ENCODE measurements at regions of chr15 and their contacts with region 1.

Region 1: GRCh38 chr15:101288908-101289513 is 6.0 kb downstream of the SNRPA1 start:
- DNase-seq: peak; percentile 74 to 89 (median 84)
- H3K4me3 ChIP-seq: no peak overlapping the region
- H3K27ac ChIP-seq: no peak overlapping the region
- H3K4me1 ChIP-seq: peaks cover 3 to 18% (median 12%) of the 10 kb centered on the region in 4 experiments
- H3K27me3 ChIP-seq: no peaks in the 10 kb centered on the region

Region 2: DNA sequence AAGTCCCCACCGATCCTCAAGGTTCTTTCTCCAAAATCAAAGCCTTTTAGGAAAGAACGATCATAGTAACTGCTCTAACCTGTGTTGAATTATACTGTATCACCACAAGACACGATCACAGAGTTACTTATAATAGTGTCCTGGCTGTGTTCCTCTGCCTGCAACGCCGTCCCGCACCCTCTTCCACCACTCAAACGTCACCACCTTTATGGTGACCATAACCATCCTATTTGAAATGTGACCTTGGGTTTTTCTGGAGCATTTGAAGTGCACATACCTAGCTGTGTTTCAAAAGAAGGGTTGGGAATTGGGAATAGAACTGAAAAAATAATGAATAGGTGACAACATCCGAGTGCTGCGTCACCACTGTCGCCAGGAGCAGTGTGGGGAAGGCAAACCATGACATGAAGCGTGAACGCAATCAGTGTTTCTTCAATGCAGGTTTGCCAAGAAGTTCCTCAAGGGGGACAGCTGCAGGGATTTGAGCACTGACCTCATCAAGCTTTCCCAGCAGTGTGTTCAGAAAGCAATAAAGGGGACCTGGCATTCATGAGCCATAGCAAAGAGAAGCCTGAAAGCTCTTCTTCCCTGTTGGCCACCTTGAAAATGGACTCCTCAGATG is 11.0 kb before region 1 on chr15:
- CTCF ChIA-PET with region 1: interaction called, 25 read pairs
- POLR2A ChIA-PET with region 1: interaction called, 3 read pairs
- DNase-seq: no peak
- H3K4me3 ChIP-seq: peak overlapping the region in 6 of 7 experiments; percentile 80 to 98 (median 93)
- H3K27ac ChIP-seq: no peak overlapping the region
- H3K4me1 ChIP-seq: peaks cover 5 to 16% (median 14%) of the 10 kb centered on the region in 4 experiments
- H3K27me3 ChIP-seq: no peaks in the 10 kb centered on the region

Region 3: GRCh38 chr15:101333401-101333800 is 44.4 kb after region 1 on chr15:
- CTCF ChIA-PET with region 1: no interaction called
- POLR2A ChIA-PET with region 1: no interaction called
- DNase-seq: no peak
- H3K4me3 ChIP-seq: no peak overlapping the region
- H3K27ac ChIP-seq: no peak overlapping the region
- H3K4me1 ChIP-seq: no peaks in the 10 kb centered on the region
- H3K27me3 ChIP-seq: peaks cover 0 to 52% (median 13%) of the 10 kb centered on the region in 5 experiments

Region 4: DNA sequence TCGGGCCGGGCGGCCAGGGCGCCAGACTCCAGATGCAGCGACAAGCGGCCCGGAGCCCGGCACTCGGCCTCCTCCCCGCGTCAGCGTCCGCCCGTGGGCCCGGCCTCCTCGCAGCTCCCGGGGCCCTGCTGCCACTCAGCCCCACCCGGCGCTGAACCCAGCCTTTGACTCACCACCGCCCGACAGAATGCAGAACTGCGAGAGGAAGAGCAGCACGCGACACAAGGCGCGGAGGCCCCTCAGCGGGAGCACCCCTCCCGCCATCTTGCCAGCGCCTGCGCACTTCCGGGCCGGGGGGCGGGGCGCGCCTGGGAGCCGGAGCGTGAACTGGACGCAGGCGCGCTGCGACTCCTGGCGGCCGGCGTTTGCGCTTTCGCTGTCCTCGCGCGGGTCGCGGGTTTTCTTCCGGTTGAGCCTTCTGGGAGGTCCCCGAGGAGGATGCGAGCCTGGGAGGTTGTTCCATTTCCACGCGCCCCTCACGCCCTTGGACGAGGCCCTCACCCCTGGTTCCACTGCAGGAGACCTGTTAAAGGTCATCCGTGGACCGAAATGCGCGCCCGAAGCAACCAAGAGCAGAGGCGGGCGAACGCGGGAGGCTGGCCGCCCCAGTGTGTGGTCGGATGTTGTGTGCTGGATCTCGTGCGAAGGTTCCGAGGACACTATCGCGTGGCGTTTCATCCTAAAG is 363.2 kb after region 1 on chr15 and contains the start of gene TM2D3:
- CTCF ChIA-PET with region 1: interaction called, 23 read pairs
- POLR2A ChIA-PET with region 1: no interaction called
- DNase-seq: peak; percentile 95 to 97 (median 97)
- H3K4me3 ChIP-seq: peak within 1 kb of the TSS; percentile 78 to 93 (median 89)
- H3K27ac ChIP-seq: peak within 1 kb of the TSS; percentile 90 to 97
- H3K4me1 ChIP-seq: peaks cover 12 to 28% (median 18%) of the 10 kb centered on the region in 4 experiments
- H3K27me3 ChIP-seq: no peaks in the 10 kb centered on the region

Measured in common myeloid progenitor, CD34-positive (primary cell).